Gastrocnemius medialis (tissue), 4 donors: ENCODE measurements at regions of chr18 and their contacts with region 1.

Region 1: DNA sequence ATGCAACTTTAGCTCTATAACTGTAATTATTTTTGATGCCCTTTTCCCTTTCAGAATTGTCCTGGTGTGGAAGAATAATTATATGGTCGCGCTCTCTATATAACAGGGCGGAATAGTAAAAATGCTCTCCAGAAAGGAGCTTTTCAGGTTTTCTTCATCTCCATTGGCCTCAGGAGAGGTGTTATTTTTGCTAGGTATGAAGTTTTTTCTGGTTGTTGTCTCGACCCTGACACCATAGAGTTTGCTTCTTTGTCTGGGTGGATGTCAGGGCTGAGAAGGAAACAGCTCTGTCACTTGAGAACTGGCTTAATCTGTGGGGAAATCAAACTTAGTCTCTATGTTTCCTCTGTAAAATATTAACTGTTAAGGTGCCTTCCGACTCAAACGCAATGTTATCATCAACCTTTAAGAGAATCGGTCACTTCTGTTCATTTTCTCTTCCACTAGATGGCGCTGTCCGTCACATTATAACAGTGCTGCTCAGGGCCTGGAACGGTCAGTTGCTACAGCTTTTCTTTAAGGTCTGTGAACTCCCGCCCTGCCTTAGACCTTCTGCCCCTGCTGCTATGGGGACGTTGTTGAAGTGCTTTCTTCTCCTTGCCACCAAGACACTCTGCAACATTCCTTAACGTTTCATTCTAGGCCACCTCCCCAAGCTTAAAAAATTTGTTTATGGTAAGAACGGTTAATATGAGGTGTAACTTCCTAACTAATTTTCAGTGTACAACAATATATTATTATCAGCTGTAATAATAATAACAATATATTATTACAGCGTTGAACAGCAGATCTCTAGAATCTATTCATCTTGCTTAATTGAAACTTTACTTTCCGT is 23.8 kb upstream of the SERPINB12 start:
- DNase-seq: peak; percentile 12 to 23
- ATAC-seq: peak; percentile 76 to 89
- H3K4me3 ChIP-seq: no peak overlapping the region
- H3K27ac ChIP-seq: no peak overlapping the region
- H3K4me1 ChIP-seq: no peaks in the 10 kb centered on the region
- H3K27me3 ChIP-seq: no peaks in the 10 kb centered on the region
- CTCF ChIP-seq: peak; percentile 46 to 80 (median 66)
- POLR2A ChIP-seq: no peak

Region 2: DNA sequence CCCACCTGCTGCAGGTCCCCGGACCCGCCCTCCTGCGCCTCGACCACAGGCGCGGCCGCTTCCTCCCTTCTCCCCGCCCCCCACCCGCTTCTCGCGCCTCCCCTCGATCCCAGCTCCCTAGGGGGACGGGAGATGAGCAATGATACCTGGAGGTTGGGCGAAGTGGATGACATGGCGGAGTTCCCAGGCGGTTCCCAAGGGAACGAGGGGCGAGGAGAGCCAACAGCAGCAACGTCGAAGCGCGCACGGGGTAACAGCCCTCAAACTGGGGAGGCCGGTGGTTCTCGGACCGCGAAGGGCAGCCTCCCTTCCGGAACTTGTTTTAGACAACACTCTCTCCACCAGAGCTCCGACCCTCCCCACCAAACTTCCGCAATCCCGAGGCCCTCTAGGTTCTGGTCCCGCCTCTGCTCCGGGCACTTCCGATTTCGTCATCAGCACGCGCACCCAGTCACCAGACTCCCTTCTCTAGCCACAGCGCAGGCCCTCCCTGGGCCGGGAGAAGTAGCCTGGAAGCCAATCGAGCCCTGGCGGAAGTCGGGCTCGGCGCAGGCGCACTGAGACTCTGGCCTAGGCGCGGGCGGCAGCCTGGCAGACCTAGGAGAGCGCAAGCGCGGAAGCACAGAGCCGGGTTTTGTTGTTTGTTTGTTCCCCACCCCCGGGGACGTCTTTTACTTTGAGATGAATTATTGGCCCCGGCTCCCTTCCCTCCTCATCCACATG is 96.1 kb before region 1 on chr18 and contains the start of gene VPS4B:
- in situ Hi-C with region 1: no loop called
- intact Hi-C with region 1: no loop called
- DNase-seq: peak; percentile 98 to 99
- ATAC-seq: peak; percentile 99
- H3K4me3 ChIP-seq: peak within 1 kb of the TSS; percentile 93 to 96 (median 94)
- H3K27ac ChIP-seq: peak within 1 kb of the TSS; percentile 88 to 97 (median 93)
- H3K4me1 ChIP-seq: peaks cover 14 to 16% of the 10 kb centered on the region in 2 donors
- H3K27me3 ChIP-seq: no peaks in the 10 kb centered on the region
- CTCF ChIP-seq: peak in 1 of 5 experiments; percentile 20
- POLR2A ChIP-seq: peak; percentile 81 to 84
- total RNA-seq, gene VPS4B: 13.4 to 18.2 (median 16.0) TPM

Region 3: DNA sequence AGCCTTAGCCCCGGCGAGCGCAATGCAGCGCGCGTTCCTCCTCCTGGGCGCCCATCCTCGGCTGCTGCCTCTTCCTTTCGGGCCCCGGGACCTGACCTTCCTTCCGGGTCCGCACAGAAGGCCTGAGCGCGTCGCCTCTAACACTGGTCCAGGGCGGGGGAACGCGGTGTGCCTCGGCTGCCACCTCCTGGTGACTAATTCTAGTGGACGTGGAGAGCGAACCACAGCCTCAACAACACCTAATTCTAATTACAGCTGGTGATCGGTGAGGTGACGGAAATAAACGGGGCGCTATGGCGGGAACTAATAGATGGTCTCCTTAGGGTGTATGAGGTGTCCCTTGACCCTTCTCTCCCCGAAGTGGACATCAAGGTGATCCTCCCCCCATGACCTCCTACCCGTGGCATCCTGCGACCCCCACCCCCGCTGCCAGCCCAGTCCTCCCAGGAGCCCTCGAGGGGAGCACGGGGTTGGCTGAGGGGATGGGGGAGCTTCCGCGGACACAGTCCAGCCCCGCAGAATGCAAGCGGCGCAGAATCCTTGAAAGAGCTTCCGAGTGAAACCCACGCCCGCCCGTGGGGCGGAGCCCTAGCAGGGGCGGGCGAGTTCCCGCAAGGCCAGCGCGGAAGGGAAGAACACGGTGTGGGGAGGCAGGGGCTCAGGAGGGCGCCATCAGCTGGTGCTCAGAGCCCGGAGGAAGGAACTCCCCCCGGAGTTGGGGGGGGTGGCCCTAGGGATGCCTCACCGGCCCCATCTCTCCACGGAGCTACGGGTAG is 417.9 kb after region 1 on chr18:
- in situ Hi-C with region 1: no loop called
- intact Hi-C with region 1: loop called (anchors 1 kb)
- DNase-seq: peak; percentile 45 to 47
- ATAC-seq: peak in 1 of 2 donors; percentile 64
- H3K4me3 ChIP-seq: peak overlapping the region; percentile 38 to 57 (median 50)
- H3K27ac ChIP-seq: no peak overlapping the region
- H3K4me1 ChIP-seq: peaks cover 0 to 3% of the 10 kb centered on the region in 2 donors
- H3K27me3 ChIP-seq: no peaks in the 10 kb centered on the region
- CTCF ChIP-seq: peak; percentile 26 to 63 (median 54)
- POLR2A ChIP-seq: no peak

Region 4: DNA sequence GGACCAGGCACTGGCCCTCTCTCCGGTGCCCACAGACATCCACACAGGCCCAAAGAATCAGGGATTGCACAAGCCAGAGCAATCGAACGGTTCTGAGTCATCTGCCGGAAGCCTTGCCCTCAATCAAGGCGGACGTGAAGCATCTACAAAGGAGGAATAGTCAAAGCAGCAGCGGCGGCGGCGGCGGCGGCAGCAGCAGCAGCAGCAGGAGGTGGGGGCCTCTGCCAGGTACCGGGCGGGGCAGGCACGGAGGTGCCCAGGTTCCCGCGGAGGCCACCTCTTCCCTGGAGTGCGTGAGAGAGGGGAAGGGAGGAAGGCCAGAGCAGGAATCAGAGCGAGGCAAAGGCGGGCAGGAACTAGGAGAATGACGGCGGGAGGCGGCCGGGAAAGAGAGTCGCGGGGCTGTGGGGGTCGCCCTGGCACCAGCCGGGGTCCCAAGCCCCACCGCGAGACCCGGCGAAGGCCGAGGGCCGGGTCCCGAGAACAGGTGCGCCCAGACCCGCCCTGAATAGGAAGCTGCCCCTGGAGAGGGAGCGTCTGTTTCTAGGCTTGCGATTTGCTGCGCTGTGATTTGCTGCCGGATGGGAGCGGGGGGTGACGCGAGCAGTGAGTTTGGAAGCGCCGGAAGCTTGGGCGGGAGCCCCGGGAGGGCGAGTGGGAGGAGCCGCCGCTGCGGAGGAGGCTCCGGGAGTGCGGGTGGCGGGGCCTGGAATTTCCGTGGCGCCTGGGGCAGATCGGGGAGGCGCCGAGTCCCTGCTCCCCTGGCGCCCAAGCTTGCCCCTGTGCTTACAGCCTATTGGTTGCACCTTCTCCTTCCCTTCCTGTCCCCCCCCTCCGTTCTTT is 451.8 kb after region 1 on chr18 and contains the start of gene SERPINB8:
- in situ Hi-C with region 1: loop called (anchors 25 kb)
- intact Hi-C with region 1: loop called (anchors 10 kb)
- DNase-seq: peak; percentile 83 to 88
- ATAC-seq: peak; percentile 96 to 98
- H3K4me3 ChIP-seq: peak within 1 kb of the TSS; percentile 57 to 95 (median 80)
- H3K27ac ChIP-seq: peak within 1 kb of the TSS; percentile 82 to 92 (median 87)
- H3K4me1 ChIP-seq: peaks cover 7 to 8% of the 10 kb centered on the region in 2 donors
- H3K27me3 ChIP-seq: no peaks in the 10 kb centered on the region
- CTCF ChIP-seq: no peak
- POLR2A ChIP-seq: peak; percentile 77 to 78
- total RNA-seq, gene SERPINB8: 0.87 to 3.8 (median 1.6) TPM

Region 5: GRCh38 chr18:63979409-63979920 is 461.1 kb after region 1 on chr18:
- in situ Hi-C with region 1: loop called (anchors 25 kb)
- intact Hi-C with region 1: loop called (anchors 10 kb)
- DNase-seq: peak; percentile 9 to 23
- ATAC-seq: peak; percentile 50 to 78
- H3K4me3 ChIP-seq: peak overlapping the region in 3 of 4 donors; percentile 8 to 39 (median 10)
- H3K27ac ChIP-seq: no peak overlapping the region
- H3K4me1 ChIP-seq: peaks cover 0 to 7% of the 10 kb centered on the region in 2 donors
- H3K27me3 ChIP-seq: no peaks in the 10 kb centered on the region
- CTCF ChIP-seq: peak; percentile 43 to 75 (median 55)
- POLR2A ChIP-seq: no peak